ENCODE measurements at regions of chr1 and their contacts with region 1.

Region 1: DNA sequence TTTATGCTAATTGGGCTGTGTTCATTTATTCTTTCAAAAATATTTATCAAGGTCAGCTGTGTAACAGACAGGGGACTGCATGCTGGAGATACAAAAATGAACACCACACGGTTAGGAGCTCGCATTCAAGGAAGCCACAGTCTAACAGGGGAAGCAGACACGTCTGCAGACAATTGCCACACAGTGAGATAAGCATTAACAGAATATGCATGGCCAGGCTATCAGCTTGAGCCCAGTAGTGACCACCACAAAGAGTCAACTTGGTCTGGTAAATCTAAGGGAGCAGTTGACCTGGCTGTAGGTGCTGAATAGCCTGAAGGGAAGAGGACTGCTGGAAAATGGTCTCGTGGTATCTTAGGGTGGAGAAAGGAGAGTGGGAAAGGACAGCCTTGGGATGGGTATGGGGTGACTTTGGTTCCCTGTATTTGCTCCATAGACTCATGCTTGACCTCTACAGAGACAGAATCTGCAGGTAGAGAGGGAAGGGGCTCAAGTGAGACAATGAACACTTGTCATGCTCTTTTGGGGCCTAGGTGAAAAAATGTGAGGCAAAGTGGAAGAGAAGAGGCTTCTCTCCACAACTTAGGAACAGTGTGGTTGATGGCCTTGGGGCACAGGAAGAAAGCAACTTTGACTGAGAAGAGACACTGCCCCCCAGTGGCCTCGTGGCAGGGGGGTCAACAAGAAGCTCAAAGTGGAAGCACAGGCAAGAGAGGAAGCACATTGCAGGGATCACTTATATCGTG is 7.6 kb upstream of the NPL start:
- DNase-seq: no peak
- H3K4me3 ChIP-seq: no peak overlapping the region
- H3K27ac ChIP-seq: no peak overlapping the region
- H3K4me1 ChIP-seq: no peaks in the 10 kb centered on the region
- H3K27me3 ChIP-seq: no peaks in the 10 kb centered on the region
- CTCF ChIP-seq: peak in 2 of 3 experiments; percentile 26 to 48
- POLR2A ChIP-seq: no peak

Region 2: GRCh38 chr1:182084487-182085316 is 697.3 kb before region 1 on chr1:
- intact Hi-C with region 1: loop called (anchors 5 kb)
- DNase-seq: peak in 1 of 2 donors; percentile 96
- H3K4me3 ChIP-seq: no peak overlapping the region
- H3K27ac ChIP-seq: peak overlapping the region; percentile 28
- H3K4me1 ChIP-seq: peaks cover 43% of the 10 kb centered on the region
- H3K27me3 ChIP-seq: no peaks in the 10 kb centered on the region
- CTCF ChIP-seq: peak in 2 of 3 experiments; percentile 90 to 98
- POLR2A ChIP-seq: no peak

Region 3: DNA sequence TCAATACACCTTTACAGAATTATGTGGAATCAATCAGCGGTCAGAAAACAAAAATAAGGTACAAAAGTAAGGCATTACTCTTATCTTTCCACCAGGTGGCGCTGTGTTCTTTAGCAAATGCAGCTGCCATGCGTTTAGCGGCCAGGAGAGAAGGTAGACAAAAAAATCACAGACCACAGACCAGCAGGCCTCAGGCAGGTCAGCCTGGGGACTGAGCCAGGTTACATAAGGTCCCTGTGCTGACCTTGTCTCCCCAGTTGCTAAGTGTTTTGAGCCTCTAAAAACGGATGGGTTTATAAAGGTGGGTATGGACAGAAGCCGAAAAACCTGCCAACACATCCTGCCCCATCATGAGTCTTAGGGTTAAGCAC is 180.6 kb before region 1 on chr1:
- intact Hi-C with region 1: loop called (anchors 2 kb)
- DNase-seq: no peak
- H3K4me3 ChIP-seq: peak overlapping the region in 1 of 2 donors; percentile 22
- H3K27ac ChIP-seq: no peak overlapping the region
- H3K4me1 ChIP-seq: peaks cover 19% of the 10 kb centered on the region
- H3K27me3 ChIP-seq: no peaks in the 10 kb centered on the region
- CTCF ChIP-seq: peak; percentile 74 to 96 (median 90)
- POLR2A ChIP-seq: no peak